ENCODE measurements at regions of chr5 and their contacts with region 1.

Region 1: DNA sequence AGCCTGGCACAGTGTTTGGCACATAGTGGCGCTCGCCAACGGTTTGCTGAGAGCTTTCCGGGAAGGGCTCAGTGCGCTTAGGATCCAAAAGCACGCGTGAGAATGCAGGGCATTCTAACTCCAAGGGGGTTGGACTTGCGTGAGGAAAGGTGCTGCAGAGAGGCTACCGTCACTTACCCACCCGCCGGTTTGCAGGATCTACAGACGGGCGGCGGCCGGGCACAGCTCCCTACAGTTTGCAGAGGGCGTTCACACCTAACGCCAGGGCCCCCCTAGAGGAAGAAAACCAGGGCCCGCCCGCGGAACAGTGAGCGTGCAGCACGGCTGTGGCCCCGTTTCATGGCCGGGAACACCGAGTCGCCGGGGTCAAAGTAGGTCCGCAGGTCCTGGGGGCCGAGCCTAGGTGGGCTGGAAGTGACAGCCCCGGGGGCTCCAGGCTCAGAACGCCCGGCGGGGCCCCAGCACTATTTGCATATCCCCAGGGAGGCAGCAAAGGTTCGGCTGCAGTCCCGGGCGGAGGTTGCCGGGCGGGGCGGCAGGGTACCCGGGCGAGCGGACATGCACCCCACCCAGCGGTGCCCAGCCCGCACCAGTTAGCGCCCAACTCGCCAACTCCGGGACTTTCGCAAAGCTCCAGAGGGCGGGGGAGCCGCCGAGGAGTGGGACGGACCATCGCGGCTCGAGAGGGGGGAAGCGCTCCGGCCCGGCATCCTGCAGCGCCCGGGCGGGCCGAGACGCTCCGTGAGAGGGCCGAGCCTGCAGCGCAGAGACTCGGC is 526 bp upstream of the GALNT10 start:
- DNase-seq: peak; percentile 65 to 92 (median 75)
- ATAC-seq: peak; percentile 75
- H3K4me3 ChIP-seq: peak overlapping the region; percentile 95
- H3K4me3 Mint-ChIP-seq: peak overlapping the region; percentile 94
- H3K27ac ChIP-seq: peak overlapping the region; percentile 42 to 66
- H3K27ac Mint-ChIP-seq: peak overlapping the region; percentile 81
- H3K4me1 ChIP-seq: peaks cover 35% of the 10 kb centered on the region
- H3K4me1 Mint-ChIP-seq: peaks cover 38% of the 10 kb centered on the region
- H3K27me3 ChIP-seq: no peaks in the 10 kb centered on the region
- H3K27me3 Mint-ChIP-seq: no peaks in the 10 kb centered on the region
- CTCF ChIP-seq: peak; percentile 65

Region 2: GRCh38 chr5:154038707-154039457 is 151.1 kb before region 1 on chr5 and contains the starts of genes FAM114A2 and MFAP3:
- CTCF ChIA-PET with region 1: no interaction called
- POLR2A ChIA-PET with region 1: interaction called, 51 read pairs
- intact Hi-C with region 1: loop called in 1 of 2 experiments (anchors 5 kb)
- DNase-seq: peak; percentile 80 to 94 (median 85)
- ATAC-seq: peak; percentile 96
- H3K4me3 ChIP-seq: peak within 1 kb of the TSS; percentile 92
- H3K4me3 Mint-ChIP-seq: peak within 1 kb of the TSS; percentile 99
- H3K27ac ChIP-seq: peak within 1 kb of the TSS; percentile 69 to 91
- H3K27ac Mint-ChIP-seq: peak within 1 kb of the TSS; percentile 98
- H3K4me1 ChIP-seq: peaks cover 13% of the 10 kb centered on the region
- H3K4me1 Mint-ChIP-seq: peaks cover 72% of the 10 kb centered on the region
- H3K27me3 ChIP-seq: no peaks in the 10 kb centered on the region
- H3K27me3 Mint-ChIP-seq: no peaks in the 10 kb centered on the region
- CTCF ChIP-seq: no peak
- total RNA-seq, gene FAM114A2: 21.9 to 23.3 TPM
- total RNA-seq, gene MFAP3: 14.9 to 17.7 TPM

Region 3: GRCh38 chr5:154202379-154203260 is 12.6 kb after region 1 on chr5:
- CTCF ChIA-PET with region 1: interaction called, 20 read pairs
- POLR2A ChIA-PET with region 1: interaction called, 42 read pairs
- intact Hi-C with region 1: no loop called
- DNase-seq: peak in 12 of 14 experiments; percentile 12 to 71 (median 32)
- ATAC-seq: peak; percentile 75
- H3K4me3 ChIP-seq: peak overlapping the region; percentile 32
- H3K4me3 Mint-ChIP-seq: peak overlapping the region; percentile 55
- H3K27ac ChIP-seq: peak overlapping the region; percentile 36 to 74
- H3K27ac Mint-ChIP-seq: peak overlapping the region; percentile 85
- H3K4me1 ChIP-seq: peaks cover 53% of the 10 kb centered on the region
- H3K4me1 Mint-ChIP-seq: peaks cover 73% of the 10 kb centered on the region
- H3K27me3 ChIP-seq: no peaks in the 10 kb centered on the region
- H3K27me3 Mint-ChIP-seq: no peaks in the 10 kb centered on the region
- CTCF ChIP-seq: no peak

Region 4: DNA sequence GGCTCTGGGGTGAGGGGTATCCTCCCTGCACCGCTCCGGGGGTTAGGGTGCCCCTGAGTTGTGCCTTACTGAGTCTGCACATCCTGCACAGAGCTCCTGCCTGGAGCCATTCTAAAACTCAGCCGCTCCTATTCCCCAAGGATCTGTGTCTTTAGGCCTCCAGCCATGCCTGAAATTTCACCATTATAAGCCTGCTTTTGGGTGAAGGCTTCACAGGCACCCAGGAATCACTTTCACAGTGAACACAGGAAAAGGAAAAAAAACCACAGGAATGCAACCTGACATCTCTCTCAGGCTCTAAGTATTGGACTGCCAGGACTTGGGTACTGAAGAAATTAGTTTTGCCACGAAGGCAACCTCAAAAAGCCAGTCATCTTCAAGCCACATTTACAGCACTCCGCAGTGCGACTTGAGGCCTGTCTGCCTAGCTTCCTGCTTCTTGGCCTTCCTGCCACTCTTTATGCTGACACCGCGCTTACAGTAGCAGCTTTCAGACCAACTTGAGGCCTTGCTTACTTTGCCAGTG is 31.4 kb after region 1 on chr5:
- CTCF ChIA-PET with region 1: interaction called, 3 read pairs
- POLR2A ChIA-PET with region 1: interaction called, 23 read pairs
- intact Hi-C with region 1: no loop called
- DNase-seq: peak; percentile 36 to 80 (median 54)
- ATAC-seq: peak; percentile 98
- H3K4me3 ChIP-seq: no peak overlapping the region
- H3K4me3 Mint-ChIP-seq: peak overlapping the region; percentile 16
- H3K27ac ChIP-seq: peak overlapping the region in 1 of 2 donors; percentile 69
- H3K27ac Mint-ChIP-seq: peak overlapping the region; percentile 90
- H3K4me1 ChIP-seq: peaks cover 18% of the 10 kb centered on the region
- H3K4me1 Mint-ChIP-seq: peaks cover 62% of the 10 kb centered on the region
- H3K27me3 ChIP-seq: no peaks in the 10 kb centered on the region
- H3K27me3 Mint-ChIP-seq: no peaks in the 10 kb centered on the region
- CTCF ChIP-seq: no peak

Region 5: GRCh38 chr5:154445422-154446182 is 255.6 kb after region 1 on chr5 and contains the start of gene SAP30L:
- CTCF ChIA-PET with region 1: interaction called, 4 read pairs
- POLR2A ChIA-PET with region 1: interaction called, 6 read pairs
- intact Hi-C with region 1: loop called (anchors 5 to 10 kb)
- DNase-seq: peak; percentile 90 to 97 (median 94)
- ATAC-seq: peak; percentile 94
- H3K4me3 ChIP-seq: peak within 1 kb of the TSS; percentile 79
- H3K4me3 Mint-ChIP-seq: peak within 1 kb of the TSS; percentile 97
- H3K27ac ChIP-seq: peak within 1 kb of the TSS; percentile 42 to 73
- H3K27ac Mint-ChIP-seq: peak within 1 kb of the TSS; percentile 89
- H3K4me1 ChIP-seq: peaks cover 38% of the 10 kb centered on the region
- H3K4me1 Mint-ChIP-seq: peaks cover 69% of the 10 kb centered on the region
- H3K27me3 ChIP-seq: no peaks in the 10 kb centered on the region
- H3K27me3 Mint-ChIP-seq: no peaks in the 10 kb centered on the region
- CTCF ChIP-seq: no peak
- total RNA-seq, gene SAP30L: 32.2 to 33.6 TPM

Region 6: GRCh38 chr5:154940772-154941620 is 751.0 kb after region 1 on chr5 and contains the start of gene MRPL22:
- CTCF ChIA-PET with region 1: no interaction called
- POLR2A ChIA-PET with region 1: no interaction called
- intact Hi-C with region 1: loop called in 1 of 2 experiments (anchors 5 kb)
- DNase-seq: peak; percentile 89 to 98 (median 94)
- ATAC-seq: peak; percentile 79
- H3K4me3 ChIP-seq: peak within 1 kb of the TSS; percentile 94
- H3K4me3 Mint-ChIP-seq: peak within 1 kb of the TSS; percentile 99
- H3K27ac ChIP-seq: peak within 1 kb of the TSS; percentile 68 to 75
- H3K27ac Mint-ChIP-seq: peak within 1 kb of the TSS; percentile 97
- H3K4me1 ChIP-seq: peaks cover 44% of the 10 kb centered on the region
- H3K4me1 Mint-ChIP-seq: peaks cover 52% of the 10 kb centered on the region
- H3K27me3 ChIP-seq: no peaks in the 10 kb centered on the region
- H3K27me3 Mint-ChIP-seq: no peaks in the 10 kb centered on the region
- CTCF ChIP-seq: no peak
- total RNA-seq, gene MRPL22: 29.9 to 30.2 TPM

Measured in CD4-positive, alpha-beta T cell (primary cell).